Esophagus muscularis mucosa (tissue), 4 donors: ENCODE measurements at regions of chrX and their contacts with region 1.

Region 1: DNA sequence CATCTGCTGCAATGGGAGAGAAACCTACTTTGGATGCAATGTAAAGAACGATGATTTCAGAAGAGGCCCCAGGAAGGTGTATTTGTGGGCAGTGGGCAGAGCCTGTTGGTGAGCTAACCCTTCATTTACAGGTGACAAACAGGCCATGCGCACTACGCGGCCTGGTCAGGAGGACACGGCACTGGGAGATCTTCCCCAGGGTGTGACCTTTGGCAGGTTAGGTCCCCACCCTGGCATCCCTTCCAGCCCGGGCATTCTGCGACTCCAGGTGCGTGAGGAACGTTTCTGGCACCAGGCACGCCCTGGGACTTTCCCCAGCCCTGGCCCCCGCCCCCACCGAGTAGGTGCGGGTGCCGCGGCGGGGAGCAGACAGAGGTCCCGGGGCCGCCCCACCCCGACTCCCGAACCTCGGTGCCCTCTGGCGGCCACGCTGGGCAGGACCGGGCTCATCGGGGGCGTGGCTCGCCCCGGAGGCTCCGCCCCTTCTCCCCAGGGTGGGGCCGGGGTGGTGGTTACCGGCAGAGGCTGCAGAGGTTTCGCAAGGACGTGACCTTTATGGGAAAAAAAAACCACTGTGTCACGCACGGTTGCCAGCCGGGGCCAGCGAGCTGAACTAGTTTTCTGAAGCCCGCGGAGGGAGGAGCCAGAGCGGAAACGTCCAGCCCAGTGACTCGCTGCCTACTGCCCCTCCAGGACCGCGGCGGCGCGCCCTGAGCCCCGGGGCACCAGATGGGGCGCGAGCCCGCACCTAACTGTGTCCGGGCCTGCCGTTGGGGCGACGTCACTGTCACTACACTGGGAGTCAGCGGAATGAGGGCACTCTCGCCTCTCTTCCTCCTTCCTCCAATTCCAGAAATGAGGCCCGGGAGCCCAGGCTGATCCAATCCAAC is 5.0 kb upstream of the NYX start:
- DNase-seq: peak; percentile 95
- H3K4me3 ChIP-seq: peak overlapping the region; percentile 35 to 48 (median 40)
- H3K27ac ChIP-seq: peak overlapping the region; percentile 55 to 80 (median 74)
- H3K4me1 ChIP-seq: peaks cover 0 to 11% (median 7%) of the 10 kb centered on the region in 4 donors
- H3K27me3 ChIP-seq: no peaks in the 10 kb centered on the region
- CTCF ChIP-seq: peak; percentile 48 to 72 (median 71)
- EP300 ChIP-seq: peak; percentile 70
- POLR2A ChIP-seq: no peak

Region 2: GRCh38 chrX:41333744-41334259 is 108.4 kb before region 1 on chrX and contains the start of gene DDX3X:
- intact Hi-C with region 1: loop called (anchors 10 kb)
- DNase-seq: peak; percentile 93
- H3K4me3 ChIP-seq: peak within 1 kb of the TSS; percentile 78 to 90 (median 84)
- H3K27ac ChIP-seq: peak within 1 kb of the TSS; percentile 99 to 100 (median 100)
- H3K4me1 ChIP-seq: peaks cover 18 to 52% (median 31%) of the 10 kb centered on the region in 4 donors
- H3K27me3 ChIP-seq: no peaks in the 10 kb centered on the region
- CTCF ChIP-seq: peak in 2 of 3 experiments; percentile 10 to 25
- EP300 ChIP-seq: no peak
- POLR2A ChIP-seq: peak; percentile 98
- total RNA-seq, gene DDX3X: 169 to 282 (median 253) TPM